Ovary (tissue), 10 donors: ENCODE measurements at regions of chr13 and their contacts with region 1.

Region 1: GRCh38 chr13:98509271-98510155 is 67.4 kb downstream of the STK24 start:
- DNase-seq: peak in 1 of 5 donors; percentile 47
- H3K4me3 ChIP-seq: no peak overlapping the region
- H3K27ac ChIP-seq: no peak overlapping the region
- H3K4me1 ChIP-seq: peaks cover 23% of the 10 kb centered on the region
- H3K27me3 ChIP-seq: no peaks in the 10 kb centered on the region
- CTCF ChIP-seq: no peak
- EP300 ChIP-seq: no peak
- POLR2A ChIP-seq: no peak

Region 2: DNA sequence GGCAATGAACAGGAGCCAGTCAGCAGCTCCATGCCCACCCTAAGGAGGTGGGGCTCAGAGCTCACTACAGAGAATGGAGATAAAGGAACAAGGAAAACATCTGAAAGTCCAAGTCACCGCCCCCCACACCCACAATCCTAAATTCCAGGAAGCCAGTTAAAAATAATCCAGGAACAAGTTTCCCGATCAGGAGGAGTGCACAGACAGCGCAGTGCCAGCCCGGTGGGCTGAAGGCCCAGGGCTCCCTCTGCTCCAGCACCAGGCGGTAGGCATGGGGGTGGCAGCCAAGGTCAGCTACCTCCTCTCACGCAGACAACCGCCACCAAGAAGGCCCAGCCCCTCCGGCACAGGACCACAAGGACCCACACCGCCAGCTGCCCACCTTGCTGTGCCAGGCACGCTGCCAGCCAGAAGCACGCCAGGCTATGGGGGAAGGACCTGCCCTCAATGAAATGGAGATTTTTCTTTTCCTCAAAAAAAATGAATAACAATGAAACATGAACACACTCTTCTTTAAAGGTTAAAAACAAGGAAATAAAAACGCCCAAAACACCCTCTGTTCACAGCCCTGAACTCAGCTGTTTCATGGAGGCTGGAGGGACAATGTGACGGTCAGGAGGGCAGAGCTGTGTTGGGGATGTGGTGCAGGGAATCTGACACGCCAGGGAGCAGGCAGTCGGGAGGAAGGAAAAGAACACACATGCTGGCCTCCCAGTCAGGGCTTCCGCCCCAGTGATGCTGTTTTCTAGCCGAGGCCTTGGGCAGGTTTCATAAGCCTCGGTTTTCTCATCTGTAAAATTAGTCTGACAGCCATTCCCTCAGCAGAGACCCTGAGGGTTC is 56.4 kb after region 1 on chr13:
- intact Hi-C with region 1: loop called in 1 of 4 experiments (anchors 10 kb)
- DNase-seq: peak in 3 of 5 donors; percentile 42 to 53 (median 49)
- H3K4me3 ChIP-seq: no peak overlapping the region
- H3K27ac ChIP-seq: peak overlapping the region in 1 of 2 donors; percentile 27
- H3K4me1 ChIP-seq: peaks cover 28% of the 10 kb centered on the region
- H3K27me3 ChIP-seq: no peaks in the 10 kb centered on the region
- CTCF ChIP-seq: no peak
- EP300 ChIP-seq: no peak
- POLR2A ChIP-seq: no peak